Activated CD4-positive, alpha-beta T cell treated with anti-CD3 and anti-CD28 coated beads for 36 hours (primary cell): ENCODE measurements at regions of chr20 and their contacts with region 1.

Region 1: GRCh38 chr20:2299301-2299700 is 3.5 kb downstream of the TGM3 start:
- DNase-seq: no peak
- ATAC-seq: no peak
- H3K4me3 Mint-ChIP-seq: no peak overlapping the region
- H3K27ac Mint-ChIP-seq: no peak overlapping the region
- H3K4me1 Mint-ChIP-seq: no peaks in the 10 kb centered on the region
- H3K27me3 Mint-ChIP-seq: peaks cover 9% of the 10 kb centered on the region

Region 2: GRCh38 chr20:2237059-2237458 is 62.2 kb before region 1 on chr20:
- CTCF ChIA-PET with region 1: no interaction called
- POLR2A ChIA-PET with region 1: interaction called, 10 read pairs
- intact Hi-C with region 1: no loop called
- DNase-seq: no peak
- ATAC-seq: no peak
- H3K4me3 Mint-ChIP-seq: no peak overlapping the region
- H3K27ac Mint-ChIP-seq: no peak overlapping the region
- H3K4me1 Mint-ChIP-seq: no peaks in the 10 kb centered on the region
- H3K27me3 Mint-ChIP-seq: peaks cover 2% of the 10 kb centered on the region

Region 3: GRCh38 chr20:2276015-2276414 is 23.3 kb before region 1 on chr20:
- CTCF ChIA-PET with region 1: no interaction called
- POLR2A ChIA-PET with region 1: no interaction called
- intact Hi-C with region 1: no loop called
- DNase-seq: no peak
- ATAC-seq: no peak
- H3K4me3 Mint-ChIP-seq: no peak overlapping the region
- H3K27ac Mint-ChIP-seq: no peak overlapping the region
- H3K4me1 Mint-ChIP-seq: no peaks in the 10 kb centered on the region
- H3K27me3 Mint-ChIP-seq: peaks cover 11% of the 10 kb centered on the region